CD4-positive, alpha-beta memory T cell (primary cell): ENCODE measurements at regions of chr5 and their contacts with region 1.

Region 1: GRCh38 chr5:95858661-95859326 is 36.3 kb upstream of the GLRX start:
- DNase-seq: peak; percentile 83 to 94 (median 84)
- H3K4me3 ChIP-seq: peak overlapping the region in 1 of 2 donors; percentile 7
- H3K4me3 Mint-ChIP-seq: peak overlapping the region; percentile 32 to 75 (median 54)
- H3K27ac ChIP-seq: no peak overlapping the region
- H3K27ac Mint-ChIP-seq: peak overlapping the region in 6 of 7 donors; percentile 21 to 86 (median 65)
- H3K4me1 ChIP-seq: peaks cover 13% of the 10 kb centered on the region
- H3K4me1 Mint-ChIP-seq: peaks cover 13 to 34% (median 25%) of the 10 kb centered on the region in 4 donors
- H3K27me3 ChIP-seq: no peaks in the 10 kb centered on the region
- H3K27me3 Mint-ChIP-seq: peaks cover 0 to 4% of the 10 kb centered on the region in 2 donors

Region 2: DNA sequence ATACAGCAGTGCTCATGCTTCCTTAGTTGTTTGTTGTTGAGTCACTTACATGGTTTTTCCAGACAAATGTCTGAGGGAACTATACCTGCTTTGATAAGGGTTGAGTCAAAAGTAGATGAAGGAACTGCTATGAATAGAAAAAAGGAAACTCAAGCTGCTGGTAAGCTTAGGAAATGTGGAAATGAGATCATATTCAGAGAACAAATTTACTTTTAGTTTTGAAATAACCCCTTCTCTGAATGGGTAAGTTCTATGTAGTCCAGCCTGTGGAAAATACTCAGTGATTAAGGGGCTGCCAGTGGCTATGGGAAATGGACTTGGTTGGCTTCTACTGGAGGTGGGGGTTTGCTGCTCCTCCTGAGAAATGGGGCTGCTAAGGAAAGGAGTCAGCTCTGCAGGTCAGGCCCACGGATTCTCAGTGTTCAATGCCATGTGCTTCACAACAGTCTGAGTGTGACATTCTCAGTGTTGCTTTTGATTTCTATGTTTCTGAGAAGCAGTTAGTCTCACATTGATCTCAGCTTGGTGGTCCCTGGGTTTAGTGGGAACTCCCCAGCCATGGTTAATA is 11.4 kb after region 1 on chr5:
- CTCF ChIA-PET with region 1: interaction called, 11 read pairs
- POLR2A ChIA-PET with region 1: interaction called, 3 read pairs
- intact Hi-C with region 1: loop called (anchors 1 kb)
- DNase-seq: no peak
- H3K4me3 ChIP-seq: no peak overlapping the region
- H3K4me3 Mint-ChIP-seq: peak overlapping the region in 7 of 8 donors; percentile 13 to 61 (median 53)
- H3K27ac ChIP-seq: no peak overlapping the region
- H3K27ac Mint-ChIP-seq: peak overlapping the region; percentile 41 to 81 (median 65)
- H3K4me1 ChIP-seq: peaks cover 34% of the 10 kb centered on the region
- H3K4me1 Mint-ChIP-seq: peaks cover 24 to 47% (median 33%) of the 10 kb centered on the region in 4 donors
- H3K27me3 ChIP-seq: no peaks in the 10 kb centered on the region
- H3K27me3 Mint-ChIP-seq: no peaks in the 10 kb centered on the region

Region 3: DNA sequence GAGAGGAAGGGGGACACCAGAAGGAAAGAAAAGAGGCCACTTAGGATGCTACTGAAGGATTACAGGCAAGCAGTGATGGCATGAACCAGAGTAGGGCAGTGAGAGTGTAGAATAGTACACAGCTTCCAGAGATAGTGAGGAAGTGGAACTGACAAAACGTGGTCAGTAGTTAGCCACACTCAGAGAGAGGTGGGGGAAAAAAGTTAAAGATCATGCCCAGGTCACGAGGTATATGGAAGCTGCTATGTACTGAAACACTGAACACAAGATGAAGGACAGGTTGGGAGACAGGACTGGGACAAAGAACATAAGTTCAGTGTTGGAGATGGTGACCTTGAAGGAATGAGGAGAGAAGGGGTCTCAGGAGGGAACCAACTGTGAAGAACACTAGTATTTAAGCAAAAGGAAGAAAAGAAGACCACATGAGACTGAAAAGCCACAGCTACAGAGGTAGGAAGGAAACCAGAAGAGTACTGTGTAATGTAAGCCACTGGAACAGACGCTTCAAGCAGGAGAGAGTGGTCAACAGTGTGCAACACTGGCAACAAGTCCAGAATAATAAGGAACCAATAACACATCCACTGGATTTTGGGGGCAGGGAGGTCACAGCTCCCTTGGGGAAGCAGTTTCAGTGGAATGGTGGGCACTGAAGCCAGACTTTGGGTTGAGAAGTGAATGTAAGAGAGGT is 57.3 kb after region 1 on chr5:
- CTCF ChIA-PET with region 1: no interaction called
- POLR2A ChIA-PET with region 1: no interaction called
- intact Hi-C with region 1: no loop called
- DNase-seq: no peak
- H3K4me3 ChIP-seq: no peak overlapping the region
- H3K4me3 Mint-ChIP-seq: no peak overlapping the region
- H3K27ac ChIP-seq: no peak overlapping the region
- H3K27ac Mint-ChIP-seq: peak overlapping the region in 2 of 7 donors; percentile 24 to 43
- H3K4me1 ChIP-seq: no peaks in the 10 kb centered on the region
- H3K4me1 Mint-ChIP-seq: peaks cover 0 to 9% (median 6%) of the 10 kb centered on the region in 4 donors
- H3K27me3 ChIP-seq: no peaks in the 10 kb centered on the region
- H3K27me3 Mint-ChIP-seq: no peaks in the 10 kb centered on the region